Colonic mucosa (tissue), 4 donors: ENCODE measurements at regions of chr3 and their contacts with region 1.

Region 1: GRCh38 chr3:114056130-114057010 is at the starts of genes CCDC191 and QTRT2:
- DNase-seq: peak; percentile 99
- H3K4me3 ChIP-seq: peak within 1 kb of the TSS; percentile 84
- H3K27ac ChIP-seq: peak within 1 kb of the TSS; percentile 84
- H3K4me1 ChIP-seq: no peaks in the 10 kb centered on the region
- H3K27me3 ChIP-seq: no peaks in the 10 kb centered on the region
- CTCF ChIP-seq: no peak
- total RNA-seq, gene CCDC191: 3.1 TPM
- total RNA-seq, gene QTRT2: 20.3 to 25.6 TPM

Region 2: GRCh38 chr3:113745273-113746068 is 310.9 kb before region 1 on chr3:
- intact Hi-C with region 1: loop called (anchors 10 kb)
- DNase-seq: peak; percentile 88
- H3K4me3 ChIP-seq: peak overlapping the region; percentile 88
- H3K27ac ChIP-seq: peak overlapping the region; percentile 98
- H3K4me1 ChIP-seq: peaks cover 12% of the 10 kb centered on the region
- H3K27me3 ChIP-seq: no peaks in the 10 kb centered on the region
- CTCF ChIP-seq: peak; percentile 49

Region 3: GRCh38 chr3:113890256-113890900 is 166.0 kb before region 1 on chr3:
- intact Hi-C with region 1: no loop called
- DNase-seq: peak; percentile 28
- H3K4me3 ChIP-seq: no peak overlapping the region
- H3K27ac ChIP-seq: no peak overlapping the region
- H3K4me1 ChIP-seq: no peaks in the 10 kb centered on the region
- H3K27me3 ChIP-seq: no peaks in the 10 kb centered on the region
- CTCF ChIP-seq: no peak

Region 4: GRCh38 chr3:113947372-113948014 is 108.9 kb before region 1 on chr3 and contains the start of gene ZDHHC23:
- intact Hi-C with region 1: loop called (anchors 10 kb)
- DNase-seq: peak; percentile 89
- H3K4me3 ChIP-seq: peak within 1 kb of the TSS; percentile 93
- H3K27ac ChIP-seq: peak within 1 kb of the TSS; percentile 79
- H3K4me1 ChIP-seq: no peaks in the 10 kb centered on the region
- H3K27me3 ChIP-seq: no peaks in the 10 kb centered on the region
- CTCF ChIP-seq: no peak
- total RNA-seq, gene ZDHHC23: 31.3 to 33.2 TPM